AG04450 (cell line): ENCODE measurements at regions of chr4 and their contacts with region 1.

Region 1: GRCh38 chr4:83284193-83285054 is at the start of gene COQ2:
- DNase-seq: peak; percentile 85
- H3K4me3 ChIP-seq: peak within 1 kb of the TSS; percentile 74
- H3K27ac ChIP-seq: peak within 1 kb of the TSS; percentile 69
- H3K27me3 ChIP-seq: no peaks in the 10 kb centered on the region
- CTCF ChIP-seq: no peak; the same call in 1 of the 2 replicates
- polyA plus RNA-seq, gene COQ2: 13.9 and 18.9 TPM in 2 replicates

Region 2: DNA sequence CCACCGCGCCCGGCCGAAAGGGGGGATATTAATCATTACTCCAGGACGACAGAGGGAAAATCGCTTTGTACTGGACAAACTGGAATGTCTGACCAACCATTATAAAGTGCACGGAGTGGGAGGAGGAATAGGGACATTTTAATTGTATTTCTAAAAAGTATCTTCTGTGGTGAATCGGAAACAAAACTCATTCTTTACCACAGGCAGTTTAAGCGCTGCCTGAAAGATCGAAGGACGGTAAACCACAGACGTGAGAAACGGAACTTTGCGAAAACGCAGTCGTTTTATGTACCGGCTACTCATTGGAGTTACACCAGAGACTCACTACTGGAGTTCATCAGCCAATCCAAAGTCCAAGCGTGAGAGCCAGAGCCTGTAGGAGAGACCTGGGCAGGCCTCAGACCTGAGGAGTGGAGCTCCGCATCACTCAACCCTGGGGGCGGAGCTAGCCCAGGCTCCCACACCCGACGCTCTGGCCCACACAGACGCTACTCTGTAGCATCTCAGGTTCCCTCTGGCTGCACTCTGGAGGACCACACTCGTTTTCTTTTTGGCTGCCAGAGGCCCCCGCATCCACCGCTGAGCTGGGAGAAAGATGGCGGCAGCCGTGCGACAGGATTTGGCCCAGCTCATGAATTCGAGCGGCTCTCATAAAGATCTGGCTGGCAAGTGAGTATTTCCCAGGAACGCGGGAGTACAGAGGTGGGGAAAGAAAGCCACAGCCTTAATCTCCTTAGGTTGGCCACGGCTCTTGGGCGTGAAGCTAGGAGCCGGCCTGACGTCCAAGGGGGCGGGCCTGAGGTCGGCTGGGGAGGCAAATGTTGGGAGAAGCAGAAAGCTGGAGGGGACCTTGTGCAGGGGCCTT is 249.6 kb before region 1 on chr4 and contains the start of gene COPS4:
- CTCF ChIA-PET with region 1: interaction called, 17 read pairs
- POLR2A ChIA-PET with region 1: interaction called, 14 read pairs
- DNase-seq: peak; percentile 99
- H3K4me3 ChIP-seq: peak within 1 kb of the TSS; percentile 90
- H3K27ac ChIP-seq: peak within 1 kb of the TSS; percentile 92
- H3K27me3 ChIP-seq: peaks cover 6% of the 10 kb centered on the region
- CTCF ChIP-seq: peak; percentile 59
- polyA plus RNA-seq, gene COPS4: 59.0 and 78.4 TPM in 2 replicates

Region 3: GRCh38 chr4:83074086-83074704 is 210.2 kb before region 1 on chr4:
- CTCF ChIA-PET with region 1: interaction called, 69 read pairs
- POLR2A ChIA-PET with region 1: no interaction called
- DNase-seq: peak; percentile 43
- H3K4me3 ChIP-seq: no peak overlapping the region
- H3K27ac ChIP-seq: no peak overlapping the region
- H3K27me3 ChIP-seq: no peaks in the 10 kb centered on the region
- CTCF ChIP-seq: peak; percentile 72

Region 4: DNA sequence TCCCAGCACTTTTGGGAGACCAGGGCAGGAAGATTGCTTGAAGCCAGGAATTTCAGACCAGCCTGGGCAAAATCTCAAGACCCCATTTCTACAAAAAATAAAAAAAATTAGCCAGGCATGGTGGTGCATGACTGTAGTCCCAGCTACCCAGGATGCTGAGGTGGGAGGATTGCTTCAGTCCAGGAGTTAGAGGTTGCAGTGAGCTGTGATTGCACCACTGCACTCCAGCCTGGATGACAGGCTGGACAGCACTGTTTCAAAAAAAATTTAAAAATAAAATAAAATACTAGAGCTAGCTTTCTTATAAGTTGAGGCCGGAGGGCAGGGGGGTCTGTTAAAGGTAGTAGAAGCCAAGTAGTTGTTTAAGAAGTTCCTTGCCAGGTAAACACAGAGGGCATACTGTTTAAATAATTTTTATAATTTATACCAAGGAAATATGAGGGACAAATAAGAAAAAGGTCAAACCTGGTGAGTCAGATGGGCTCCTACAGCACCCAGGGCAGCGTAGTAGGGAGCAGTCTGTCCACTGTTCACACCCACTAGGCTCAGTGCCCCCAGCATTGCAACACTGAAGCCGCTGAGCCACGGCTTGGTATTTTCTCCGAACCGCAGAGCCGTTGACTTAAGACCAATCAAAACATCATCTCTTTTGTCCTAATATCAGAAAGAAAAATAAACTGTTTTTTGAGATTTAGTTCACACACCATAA is 17.1 kb before region 1 on chr4:
- CTCF ChIA-PET with region 1: interaction called, 19 read pairs
- POLR2A ChIA-PET with region 1: no interaction called
- DNase-seq: no peak
- H3K4me3 ChIP-seq: no peak overlapping the region
- H3K27ac ChIP-seq: no peak overlapping the region
- H3K27me3 ChIP-seq: no peaks in the 10 kb centered on the region
- CTCF ChIP-seq: no peak

Region 5: DNA sequence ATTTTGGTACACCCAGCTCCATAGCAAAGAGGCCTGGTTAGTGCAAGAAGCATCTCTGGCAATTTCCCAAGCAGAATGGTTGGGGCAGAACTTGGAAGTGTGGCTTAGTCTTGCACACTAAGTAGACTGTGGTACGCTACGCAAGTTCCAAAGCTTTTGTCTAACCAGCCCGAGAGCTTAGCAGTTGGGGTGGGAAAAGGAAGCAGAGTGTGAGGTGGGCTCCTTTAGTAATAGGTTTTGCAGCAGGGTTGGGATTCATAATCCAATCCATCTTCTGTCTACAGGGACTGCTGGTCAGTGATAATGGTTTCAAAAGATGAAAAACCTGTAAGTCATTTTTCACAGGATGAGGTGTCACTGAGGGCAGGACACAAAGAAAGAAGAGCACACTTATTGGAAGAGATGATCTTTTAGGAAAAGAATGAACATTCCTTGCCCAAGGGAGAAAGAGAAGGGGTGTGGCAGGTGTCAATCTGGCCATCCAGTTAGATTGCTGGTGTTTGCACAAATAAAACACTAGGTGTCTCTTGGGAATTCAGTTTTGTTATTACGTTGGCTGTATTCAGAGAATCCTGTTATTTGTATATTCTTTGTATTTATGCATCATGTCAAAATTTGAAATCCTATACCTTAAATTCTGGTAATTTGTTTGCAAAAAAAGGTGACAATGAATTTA is 495.8 kb after region 1 on chr4:
- CTCF ChIA-PET with region 1: no interaction called
- POLR2A ChIA-PET with region 1: no interaction called
- DNase-seq: no peak
- H3K4me3 ChIP-seq: no peak overlapping the region
- H3K27ac ChIP-seq: no peak overlapping the region
- H3K27me3 ChIP-seq: no peaks in the 10 kb centered on the region
- CTCF ChIP-seq: no peak